PC-9 (cell line): ENCODE measurements at regions of chr18 and their contacts with region 1.

Region 1: DNA sequence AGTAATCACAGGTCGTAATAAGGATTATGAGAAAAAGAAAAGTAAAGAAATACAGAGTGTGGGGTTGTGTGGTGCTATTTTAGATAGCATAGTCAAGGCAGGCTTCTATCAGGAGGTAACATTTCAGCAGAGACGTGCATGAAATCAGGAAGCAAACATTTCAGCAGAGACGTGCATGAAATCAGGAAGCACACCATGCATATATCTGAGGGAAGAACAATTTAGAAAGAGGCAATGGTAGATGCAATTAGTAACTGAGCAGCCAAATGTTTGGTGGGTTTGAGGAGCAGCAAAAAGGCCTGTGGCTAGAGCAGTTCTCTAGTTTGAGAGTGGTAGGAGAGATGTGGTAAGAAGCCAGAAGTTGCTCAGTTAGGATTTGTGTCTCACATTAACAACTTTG is 713.7 kb downstream of the ADCYAP1 start:
- DNase-seq: no peak
- H3K4me3 ChIP-seq: no peak overlapping the region
- H3K27ac ChIP-seq: no peak overlapping the region
- H3K4me1 ChIP-seq: no peaks in the 10 kb centered on the region
- H3K27me3 ChIP-seq: no peaks in the 10 kb centered on the region
- CTCF ChIP-seq: no peak

Region 2: GRCh38 chr18:805008-805754 is 813.2 kb before region 1 on chr18:
- CTCF ChIA-PET with region 1: no interaction called
- POLR2A ChIA-PET with region 1: no interaction called
- intact Hi-C with region 1: no loop called
- DNase-seq: no peak
- H3K4me3 ChIP-seq: no peak overlapping the region
- H3K27ac ChIP-seq: no peak overlapping the region
- H3K4me1 ChIP-seq: peaks cover 10% of the 10 kb centered on the region; the same call in 1 of the 2 replicates
- H3K27me3 ChIP-seq: no peaks in the 10 kb centered on the region
- CTCF ChIP-seq: no peak

Region 3: DNA sequence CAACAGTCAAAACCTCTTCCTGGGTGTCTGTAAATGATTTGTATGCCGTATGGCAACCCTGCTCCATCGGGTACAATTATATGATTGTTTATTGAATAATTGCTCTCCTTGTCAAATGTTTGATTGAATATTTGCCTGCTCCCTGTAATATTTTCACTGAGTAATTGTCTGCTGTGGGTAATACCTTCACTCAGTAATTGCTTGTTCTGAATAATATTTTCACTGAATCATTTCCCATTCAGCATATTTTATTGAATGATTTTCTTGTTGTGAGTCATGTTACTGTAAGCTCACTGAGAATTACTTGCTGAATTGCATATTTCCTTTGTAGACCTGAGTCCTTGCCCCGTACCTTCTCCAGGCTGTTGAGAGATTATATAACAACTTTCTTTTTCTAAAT is 417.7 kb after region 1 on chr18:
- CTCF ChIA-PET with region 1: no interaction called
- POLR2A ChIA-PET with region 1: interaction called, 14 read pairs
- intact Hi-C with region 1: no loop called
- DNase-seq: no peak
- H3K4me3 ChIP-seq: no peak overlapping the region
- H3K27ac ChIP-seq: no peak overlapping the region
- H3K4me1 ChIP-seq: 0 out of 2 replicates have a peak, but pooled peaks cover 5% of the 10 kb centered on the region
- H3K27me3 ChIP-seq: no peaks in the 10 kb centered on the region
- CTCF ChIP-seq: no peak